Caco-2 (cell line): ENCODE measurements at regions of chr16 and their contacts with region 1.

Region 1: GRCh38 chr16:9665851-9666271 is 516.4 kb downstream of the GRIN2A start:
- DNase-seq: no peak
- H3K4me3 ChIP-seq: no peak overlapping the region
- H3K4me3 Mint-ChIP-seq: no peak overlapping the region
- H3K27ac Mint-ChIP-seq: no peak overlapping the region
- H3K4me1 ChIP-seq: no peaks in the 10 kb centered on the region
- H3K4me1 Mint-ChIP-seq: no peaks in the 10 kb centered on the region
- H3K27me3 ChIP-seq: no peaks in the 10 kb centered on the region
- H3K27me3 Mint-ChIP-seq: no peaks in the 10 kb centered on the region
- CTCF ChIP-seq: no peak

Region 2: GRCh38 chr16:9703731-9704130 is 37.9 kb after region 1 on chr16:
- CTCF ChIA-PET with region 1: no interaction called
- POLR2A ChIA-PET with region 1: no interaction called
- intact Hi-C with region 1: loop called (anchors 5 kb)
- DNase-seq: no peak
- H3K4me3 ChIP-seq: no peak overlapping the region
- H3K4me3 Mint-ChIP-seq: no peak overlapping the region
- H3K27ac Mint-ChIP-seq: peak overlapping the region; percentile 32
- H3K4me1 ChIP-seq: peaks cover 21% of the 10 kb centered on the region
- H3K4me1 Mint-ChIP-seq: peaks cover 13% of the 10 kb centered on the region
- H3K27me3 ChIP-seq: no peaks in the 10 kb centered on the region
- H3K27me3 Mint-ChIP-seq: no peaks in the 10 kb centered on the region
- CTCF ChIP-seq: no peak